Activated T-helper 1 cell treated with anti-CD3 and anti-CD28 coated beads, Interleukin-12 subunit alpha, Interleukin-12 subunit beta, Interleukin-2, Interleukin-4 antibody, amounts not matched to agents 30 ng/mL and 10 ng/mL and 1 ng/mL, durations not matched to agents 14 hours and 24 hours and 36 hours (primary cell): ENCODE measurements at regions of chr20 and their contacts with region 1.

Region 1: DNA sequence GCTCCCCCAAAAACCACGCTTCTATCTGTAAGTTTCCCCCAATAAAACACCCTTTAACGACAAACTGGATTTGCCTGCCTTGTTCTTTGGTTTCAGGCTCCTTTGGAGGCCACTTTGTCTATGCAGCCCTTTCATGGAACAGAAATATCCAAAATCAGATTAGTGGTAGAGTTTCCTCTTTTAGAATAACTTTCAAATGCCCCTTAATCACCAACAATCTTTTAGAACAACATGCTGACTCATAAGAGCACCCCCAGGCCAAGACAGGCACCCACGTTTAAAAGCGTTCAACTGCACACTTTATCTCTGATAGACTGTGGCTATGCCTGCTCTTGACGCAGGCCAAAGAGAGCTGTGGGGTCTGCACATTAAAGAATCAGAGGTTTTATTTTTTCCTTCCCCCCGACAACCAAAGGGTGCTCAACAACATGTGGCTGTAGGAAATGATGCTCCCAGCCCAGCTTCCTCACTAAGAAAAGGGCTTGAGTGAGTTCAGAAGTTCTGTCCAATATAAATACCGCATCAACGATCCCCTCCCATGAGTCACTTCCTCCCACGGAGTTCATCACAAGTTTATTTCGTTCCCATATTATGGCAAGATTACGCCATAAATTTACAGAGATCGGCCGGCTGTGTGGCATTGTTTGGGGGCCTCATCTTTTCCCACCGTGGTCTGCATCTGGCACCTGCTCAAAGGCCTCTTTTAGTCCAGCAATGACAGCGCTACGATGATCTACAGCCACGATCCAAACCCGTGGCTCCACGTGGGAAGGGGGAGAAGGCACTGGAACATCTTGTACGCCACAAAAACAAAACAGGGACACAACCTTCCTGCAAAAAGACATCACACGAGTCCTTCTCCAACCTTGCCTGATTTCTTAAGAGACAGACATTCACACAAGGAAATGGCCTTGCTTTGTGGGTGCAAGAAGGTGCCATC is 88.8 kb upstream of the NFATC2 start:
- DNase-seq: peak; percentile 7
- H3K4me3 Mint-ChIP-seq: peak overlapping the region; percentile 5
- H3K27ac Mint-ChIP-seq: peak overlapping the region; percentile 70
- H3K4me1 Mint-ChIP-seq: peaks cover 43% of the 10 kb centered on the region
- H3K27me3 Mint-ChIP-seq: peaks cover 7% of the 10 kb centered on the region

Region 2: DNA sequence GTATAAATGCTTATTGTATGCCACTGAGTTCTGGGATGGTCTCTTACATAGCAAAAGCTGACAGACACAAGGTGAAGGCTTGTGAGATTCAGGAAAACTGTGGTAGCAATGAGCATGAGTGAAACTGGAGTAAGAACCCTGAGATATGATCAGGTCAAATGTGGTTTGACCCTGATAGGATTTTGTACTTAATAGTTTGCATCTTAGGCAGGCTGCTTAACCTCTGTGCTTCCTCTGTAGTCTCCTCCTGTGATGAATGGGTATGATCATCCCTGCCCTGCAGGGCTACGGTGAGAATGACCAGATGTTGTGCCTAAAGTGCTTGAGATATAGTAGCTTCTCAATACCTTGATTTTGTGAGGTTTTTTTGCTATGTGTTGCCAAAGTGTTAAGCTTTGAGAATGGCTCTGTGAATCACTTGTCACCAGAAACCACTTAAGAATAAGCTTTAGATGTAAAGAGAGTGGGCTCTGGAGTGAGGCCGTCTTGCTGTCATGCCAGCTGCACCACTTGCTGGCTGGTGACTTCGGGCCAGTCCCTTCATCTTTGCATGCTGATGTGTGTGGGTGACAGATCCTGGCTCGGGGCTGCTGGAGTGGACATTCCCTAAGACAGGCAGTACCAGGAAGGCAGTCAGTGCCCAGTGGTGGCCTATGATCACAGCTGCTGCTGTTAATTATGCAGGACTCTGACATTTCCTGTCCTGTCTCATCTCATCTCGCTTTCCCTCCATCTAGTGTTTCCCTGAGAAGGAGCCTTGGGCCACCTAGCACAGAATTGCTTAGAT is 343.5 kb before region 1 on chr20:
- intact Hi-C with region 1: no loop called
- DNase-seq: no peak
- H3K4me3 Mint-ChIP-seq: no peak overlapping the region
- H3K27ac Mint-ChIP-seq: no peak overlapping the region
- H3K4me1 Mint-ChIP-seq: no peaks in the 10 kb centered on the region
- H3K27me3 Mint-ChIP-seq: peaks cover 19% of the 10 kb centered on the region

Region 3: GRCh38 chr20:51531141-51531710 is 100.1 kb before region 1 on chr20:
- intact Hi-C with region 1: loop called (anchors 1 kb)
- DNase-seq: peak; percentile 58
- H3K4me3 Mint-ChIP-seq: peak overlapping the region; percentile 84
- H3K27ac Mint-ChIP-seq: peak overlapping the region; percentile 99
- H3K4me1 Mint-ChIP-seq: peaks cover 92% of the 10 kb centered on the region
- H3K27me3 Mint-ChIP-seq: no peaks in the 10 kb centered on the region

Region 4: DNA sequence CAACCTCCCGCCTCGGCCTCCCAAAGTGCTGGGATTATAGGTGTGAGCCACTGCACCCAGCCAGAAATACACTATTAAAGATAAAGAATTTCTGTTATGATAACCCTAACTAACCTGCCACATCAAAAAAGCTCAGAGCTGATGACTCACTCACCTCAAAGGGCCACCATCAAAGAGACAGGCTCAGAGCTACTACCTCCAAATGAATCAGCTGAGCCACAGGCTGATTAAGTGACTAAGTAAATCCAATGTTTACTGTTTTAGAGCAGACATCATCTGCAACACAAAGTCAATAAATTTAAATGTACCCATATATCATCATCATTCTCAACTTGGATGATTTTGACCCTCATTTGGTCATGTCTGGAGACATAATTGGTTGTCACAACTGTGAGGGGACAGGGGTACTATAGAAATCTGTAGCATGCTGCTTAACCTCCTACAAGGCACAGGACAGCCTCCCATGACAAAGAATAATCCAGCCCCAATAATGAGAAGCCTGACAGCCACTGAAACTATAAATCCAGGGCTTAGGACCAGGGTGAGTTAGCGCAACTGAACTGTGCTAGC is 30.4 kb after region 1 on chr20:
- intact Hi-C with region 1: loop called (anchors 1 kb)
- DNase-seq: peak; percentile 20
- H3K4me3 Mint-ChIP-seq: peak overlapping the region; percentile 5
- H3K27ac Mint-ChIP-seq: peak overlapping the region; percentile 58
- H3K4me1 Mint-ChIP-seq: peaks cover 24% of the 10 kb centered on the region
- H3K27me3 Mint-ChIP-seq: no peaks in the 10 kb centered on the region

Region 5: GRCh38 chr20:52031563-52032303 is 400.5 kb after region 1 on chr20:
- intact Hi-C with region 1: loop called (anchors 1 kb)
- DNase-seq: peak; percentile 48
- H3K4me3 Mint-ChIP-seq: peak overlapping the region; percentile 40
- H3K27ac Mint-ChIP-seq: peak overlapping the region; percentile 82
- H3K4me1 Mint-ChIP-seq: peaks cover 31% of the 10 kb centered on the region
- H3K27me3 Mint-ChIP-seq: no peaks in the 10 kb centered on the region

Region 6: GRCh38 chr20:52047811-52048764 is 416.8 kb after region 1 on chr20:
- intact Hi-C with region 1: loop called (anchors 1 kb)
- DNase-seq: peak; percentile 38
- H3K4me3 Mint-ChIP-seq: peak overlapping the region; percentile 48
- H3K27ac Mint-ChIP-seq: peak overlapping the region; percentile 84
- H3K4me1 Mint-ChIP-seq: peaks cover 34% of the 10 kb centered on the region
- H3K27me3 Mint-ChIP-seq: peaks cover 1% of the 10 kb centered on the region